GM18951 (cell line): ENCODE measurements at regions of chr1 and their contacts with region 1.

Region 1: GRCh38 chr1:224113918-224114786 is at the start of gene FBXO28:
- POLR2A ChIP-seq: peak; percentile 94

Region 2: GRCh38 chr1:224273641-224274040 is 159.5 kb after region 1 on chr1:
- in situ Hi-C with region 1: no loop called
- POLR2A ChIP-seq: no peak

Region 3: GRCh38 chr1:224459966-224460365 is 345.8 kb after region 1 on chr1:
- in situ Hi-C with region 1: loop called (anchors 10 kb)
- POLR2A ChIP-seq: no peak